ENCODE measurements at regions of chr3 and their contacts with region 1.

Region 1: GRCh38 chr3:168213920-168214319 is 118.2 kb upstream of the GOLIM4 start:
- DNase-seq: no peak
- H3K4me3 ChIP-seq: no peak overlapping the region
- H3K27ac ChIP-seq: no peak overlapping the region
- H3K4me1 ChIP-seq: no peaks in the 10 kb centered on the region
- H3K27me3 ChIP-seq: no peaks in the 10 kb centered on the region
- CTCF ChIP-seq: no peak

Region 2: DNA sequence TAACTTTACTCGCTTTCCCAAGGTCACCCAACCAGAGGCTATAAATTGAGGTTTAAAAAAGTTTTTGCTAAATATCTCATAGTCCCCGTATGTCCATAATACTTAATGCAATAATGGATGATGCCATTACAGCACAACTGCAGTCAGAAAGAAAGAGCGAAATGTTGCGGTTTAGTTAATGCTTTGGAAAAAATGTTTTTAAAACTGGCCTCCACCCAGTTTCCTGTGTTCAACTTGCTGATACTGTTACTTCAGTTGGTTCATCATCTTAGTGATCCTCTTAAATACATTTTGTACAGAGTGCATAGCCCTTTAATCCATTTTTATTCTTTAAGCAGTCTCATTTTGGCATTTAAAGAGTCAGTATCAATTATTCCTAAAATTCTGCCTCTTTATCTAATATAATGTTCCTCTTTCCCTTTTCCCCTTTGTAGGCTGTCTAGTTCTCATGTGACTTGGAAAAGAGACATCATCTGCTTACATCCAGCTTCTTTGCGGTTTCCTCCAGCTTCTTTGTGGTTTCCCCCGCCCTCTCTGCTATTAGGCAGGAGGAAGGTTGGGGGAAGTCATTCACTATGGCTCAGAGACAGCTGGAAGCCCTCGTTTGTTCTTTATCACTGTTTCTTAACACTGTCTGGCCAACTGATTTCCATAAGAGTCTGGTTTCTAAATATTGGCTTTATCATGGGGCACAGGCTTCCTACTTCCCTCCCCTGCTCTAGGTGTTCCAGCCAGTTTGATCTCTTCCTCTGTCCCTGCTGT is 272.5 kb before region 1 on chr3:
- intact Hi-C with region 1: no loop called
- DNase-seq: peak; percentile 24
- H3K4me3 ChIP-seq: no peak overlapping the region
- H3K27ac ChIP-seq: no peak overlapping the region
- H3K4me1 ChIP-seq: no peaks in the 10 kb centered on the region
- H3K27me3 ChIP-seq: no peaks in the 10 kb centered on the region
- CTCF ChIP-seq: no peak

Region 3: GRCh38 chr3:168034152-168034928 is 179.6 kb before region 1 on chr3:
- intact Hi-C with region 1: no loop called
- DNase-seq: no peak
- H3K4me3 ChIP-seq: no peak overlapping the region
- H3K27ac ChIP-seq: no peak overlapping the region
- H3K4me1 ChIP-seq: no peaks in the 10 kb centered on the region
- H3K27me3 ChIP-seq: no peaks in the 10 kb centered on the region
- CTCF ChIP-seq: no peak

Region 4: DNA sequence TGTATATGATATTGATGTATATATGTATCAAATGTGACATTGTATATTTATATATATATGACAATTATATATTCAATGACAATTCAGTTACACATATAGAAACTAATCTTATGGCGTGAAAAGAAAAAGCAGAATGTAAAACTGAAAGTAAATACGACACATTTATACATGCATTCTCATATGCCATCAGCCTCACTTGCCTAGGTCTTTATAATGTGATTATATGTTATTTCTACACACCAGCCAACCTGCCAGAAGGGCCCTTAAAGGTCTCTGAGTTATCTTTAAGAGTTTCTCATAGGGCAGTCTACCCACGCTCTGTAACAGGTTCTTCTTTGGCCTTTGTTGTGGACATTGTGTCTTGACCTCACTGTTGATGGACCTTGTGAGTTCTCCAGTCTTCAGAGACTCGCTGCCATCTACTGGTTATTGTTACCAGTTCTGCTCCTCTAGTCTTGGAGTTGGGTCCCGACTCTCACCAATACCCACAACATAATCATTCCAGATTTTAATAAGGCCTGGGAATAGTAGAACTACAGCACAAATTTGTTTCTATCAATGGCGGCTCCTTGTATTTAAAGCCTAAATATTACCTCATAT is 253.3 kb after region 1 on chr3:
- intact Hi-C with region 1: loop called (anchors 5 kb)
- DNase-seq: peak; percentile 18
- H3K4me3 ChIP-seq: no peak overlapping the region
- H3K27ac ChIP-seq: no peak overlapping the region
- H3K4me1 ChIP-seq: no peaks in the 10 kb centered on the region
- H3K27me3 ChIP-seq: no peaks in the 10 kb centered on the region
- CTCF ChIP-seq: no peak

Region 5: DNA sequence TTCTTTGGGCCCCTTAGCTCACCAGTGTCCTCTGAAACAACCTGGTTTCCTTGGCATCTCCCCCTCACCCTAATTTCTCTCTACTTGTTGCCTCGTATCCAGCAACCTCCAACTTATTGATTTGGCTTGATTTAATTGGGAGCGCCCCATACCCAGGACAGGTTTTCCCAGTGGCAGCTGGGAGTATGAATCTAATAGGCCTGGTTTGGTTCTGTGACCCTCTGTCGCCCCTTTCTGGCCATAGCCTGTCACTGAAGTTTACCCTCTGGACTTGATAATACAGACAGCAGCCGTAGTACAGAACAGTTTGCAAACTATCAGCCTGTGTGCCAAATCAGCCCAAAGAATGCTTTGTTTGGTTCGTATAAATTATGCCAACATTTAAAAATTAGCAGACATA is 406.9 kb after region 1 on chr3:
- intact Hi-C with region 1: loop called (anchors 10 kb)
- DNase-seq: peak; percentile 21
- H3K4me3 ChIP-seq: no peak overlapping the region
- H3K27ac ChIP-seq: no peak overlapping the region
- H3K4me1 ChIP-seq: no peaks in the 10 kb centered on the region
- H3K27me3 ChIP-seq: no peaks in the 10 kb centered on the region
- CTCF ChIP-seq: no peak

Region 6: GRCh38 chr3:168847291-168847883 is 633.5 kb after region 1 on chr3:
- intact Hi-C with region 1: loop called (anchors 2 kb)
- DNase-seq: no peak
- H3K4me3 ChIP-seq: no peak overlapping the region
- H3K27ac ChIP-seq: no peak overlapping the region
- H3K4me1 ChIP-seq: no peaks in the 10 kb centered on the region
- H3K27me3 ChIP-seq: no peaks in the 10 kb centered on the region
- CTCF ChIP-seq: peak; percentile 42

Measured in colonic mucosa (tissue), 4 donors.